Activated T-helper 2 cell treated with anti-CD3 and anti-CD28 coated beads, Interferon-gamma antibody, Interleukin-2, Interleukin-4, amounts not matched to agents 10 μg/mL and 5 μg/mL and 100 μg/mL, durations not matched to agents 14 hours and 24 hours and 36 hours (primary cell): ENCODE measurements at regions of chr22 and their contacts with region 1.

Region 1: DNA sequence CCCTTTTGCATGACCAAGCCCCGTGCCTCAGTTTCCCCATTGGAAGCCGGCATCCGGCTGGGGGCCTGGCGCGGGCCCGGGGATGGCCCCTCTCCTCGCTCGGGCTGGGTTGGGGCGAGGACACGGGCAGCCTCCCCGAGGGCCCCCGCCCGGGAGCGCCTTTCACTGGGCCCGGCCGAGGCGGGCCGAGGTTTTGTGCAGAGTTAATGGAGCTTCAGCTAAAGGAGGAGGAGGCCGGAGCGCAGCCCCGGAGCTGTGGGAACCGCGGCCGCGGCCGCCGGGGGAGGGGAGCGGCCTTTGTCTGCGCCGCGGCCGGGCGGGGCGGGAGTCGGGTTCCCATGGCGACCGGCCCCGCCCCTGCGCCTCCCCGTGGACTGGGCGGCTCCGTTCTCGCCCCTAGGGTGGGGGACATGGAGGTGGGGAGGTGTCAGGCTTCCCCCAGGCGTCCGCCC is 1.4 kb upstream of the MAPK11 start:
- DNase-seq: peak; percentile 49
- H3K4me3 Mint-ChIP-seq: no peak overlapping the region
- H3K27ac Mint-ChIP-seq: no peak overlapping the region
- H3K4me1 Mint-ChIP-seq: peaks cover 1% of the 10 kb centered on the region
- H3K27me3 Mint-ChIP-seq: peaks cover 15% of the 10 kb centered on the region

Region 2: GRCh38 chr22:50190182-50190940 is 81.2 kb before region 1 on chr22:
- intact Hi-C with region 1: no loop called
- DNase-seq: peak; percentile 83
- H3K4me3 Mint-ChIP-seq: peak overlapping the region; percentile 84
- H3K27ac Mint-ChIP-seq: peak overlapping the region; percentile 95
- H3K4me1 Mint-ChIP-seq: peaks cover 30% of the 10 kb centered on the region
- H3K27me3 Mint-ChIP-seq: no peaks in the 10 kb centered on the region

Region 3: DNA sequence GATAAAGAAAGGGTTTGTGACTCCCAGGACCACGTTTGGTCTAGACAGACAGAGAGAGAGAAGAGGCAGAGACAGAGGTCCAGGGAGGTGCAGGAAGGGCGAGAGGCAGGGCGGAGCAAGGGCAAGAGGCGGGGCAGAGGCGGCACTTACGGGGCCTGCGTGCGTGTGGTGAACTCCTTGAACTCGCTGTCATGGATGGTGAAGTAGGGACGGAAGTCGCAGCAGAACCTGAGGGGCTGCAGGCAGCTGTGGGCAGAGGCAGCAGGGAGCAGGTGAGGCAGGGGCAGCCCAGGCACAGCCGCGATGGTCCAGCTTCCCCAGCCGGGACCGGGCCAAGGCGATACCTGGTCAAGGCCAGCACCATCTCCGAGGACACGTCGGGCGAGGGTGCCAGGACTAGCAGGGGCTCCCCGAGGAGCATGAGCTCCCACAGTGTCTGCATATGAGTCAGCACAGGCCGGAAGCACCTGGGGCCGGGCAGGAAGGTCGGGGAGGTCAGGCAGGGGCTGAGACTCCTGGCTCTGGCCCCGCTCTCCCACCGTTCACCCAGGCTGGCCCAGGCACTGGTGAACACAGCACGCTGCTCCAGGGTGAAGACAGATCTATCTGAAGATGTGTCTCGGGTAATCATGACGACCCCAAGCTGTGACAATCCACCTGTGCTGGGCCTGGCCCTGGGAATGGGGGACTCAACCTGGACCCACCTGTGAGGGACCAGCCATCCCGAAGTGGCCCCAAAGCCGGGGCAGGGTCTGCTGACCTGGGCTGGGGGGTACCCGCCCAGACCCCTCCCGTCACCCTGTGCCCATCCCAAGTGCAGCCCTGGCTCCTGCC is 43.1 kb after region 1 on chr22:
- intact Hi-C with region 1: loop called (anchors 5 kb)
- DNase-seq: peak; percentile 72
- H3K4me3 Mint-ChIP-seq: peak overlapping the region; percentile 81
- H3K27ac Mint-ChIP-seq: peak overlapping the region; percentile 73
- H3K4me1 Mint-ChIP-seq: peaks cover 11% of the 10 kb centered on the region
- H3K27me3 Mint-ChIP-seq: no peaks in the 10 kb centered on the region

Region 4: DNA sequence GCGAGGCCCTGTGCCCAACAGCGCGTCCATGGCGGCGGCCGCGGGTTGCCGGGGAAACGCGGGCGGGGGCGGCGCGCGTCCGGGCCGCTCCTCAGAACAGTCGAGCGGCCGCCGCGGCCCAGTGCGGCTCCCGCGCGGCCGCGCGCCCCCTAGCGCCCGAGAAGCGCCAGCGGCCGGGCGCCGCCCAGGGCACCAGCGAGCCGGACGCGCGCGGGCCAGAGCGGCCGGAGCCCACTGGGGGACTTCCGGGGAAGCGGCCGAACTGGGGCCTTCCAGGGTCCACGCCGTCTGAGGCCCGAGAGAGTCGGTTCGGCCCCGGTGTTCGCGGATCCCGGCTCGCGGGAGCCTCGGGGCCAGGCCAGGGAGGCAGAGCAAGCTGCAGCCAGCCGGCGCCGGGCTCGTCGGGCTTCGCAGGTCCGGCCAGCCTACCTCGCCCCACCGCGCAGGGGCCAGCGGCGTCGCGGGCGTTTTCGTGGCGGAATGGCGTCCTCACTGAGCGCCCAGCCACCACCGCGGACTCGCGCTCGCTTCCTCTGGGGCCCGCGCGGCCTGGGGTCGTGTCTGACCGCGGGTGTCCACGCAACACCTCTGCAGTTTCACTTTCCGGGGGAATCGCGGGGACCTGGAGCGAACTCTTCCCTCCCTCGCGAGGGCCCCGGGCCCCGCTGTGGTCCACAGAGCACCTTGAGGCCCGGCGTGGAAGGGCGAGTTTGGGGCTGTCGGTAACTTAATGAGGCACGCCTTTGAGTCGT is 55.6 kb after region 1 on chr22 and contains the start of gene DENND6B:
- intact Hi-C with region 1: loop called (anchors 5 kb)
- DNase-seq: peak; percentile 61
- H3K4me3 Mint-ChIP-seq: peak within 1 kb of the TSS; percentile 84
- H3K27ac Mint-ChIP-seq: peak within 1 kb of the TSS; percentile 86
- H3K4me1 Mint-ChIP-seq: peaks cover 12% of the 10 kb centered on the region
- H3K27me3 Mint-ChIP-seq: peaks cover 18% of the 10 kb centered on the region
- total RNA-seq, gene DENND6B: 2.3 and 2.7 TPM in 2 replicates

Region 5: DNA sequence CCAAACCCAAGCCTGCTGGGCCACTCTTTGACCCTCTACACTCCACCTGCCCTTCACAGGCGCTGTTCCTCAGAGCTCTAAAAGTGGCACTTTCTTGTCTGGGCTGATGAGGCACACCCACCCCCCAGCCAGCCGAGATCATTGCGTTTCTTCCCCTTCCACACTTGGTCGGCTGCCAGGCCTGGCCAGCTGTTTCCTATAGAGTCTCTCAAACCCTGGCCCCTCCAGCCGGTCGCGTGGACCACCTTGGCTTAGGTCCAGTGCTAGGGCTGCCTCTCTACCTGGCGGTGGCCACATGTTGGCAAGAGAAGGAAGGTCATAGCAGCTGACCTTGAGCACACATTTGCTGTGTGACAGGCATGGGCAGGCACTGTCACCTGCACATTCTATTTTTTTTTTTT is 132.2 kb after region 1 on chr22:
- intact Hi-C with region 1: no loop called
- DNase-seq: no peak
- H3K4me3 Mint-ChIP-seq: no peak overlapping the region
- H3K27ac Mint-ChIP-seq: no peak overlapping the region
- H3K4me1 Mint-ChIP-seq: peaks cover 15% of the 10 kb centered on the region
- H3K27me3 Mint-ChIP-seq: no peaks in the 10 kb centered on the region